Breast epithelium (tissue), 4 donors: ENCODE measurements at regions of chr6 and their contacts with region 1.

Region 1: DNA sequence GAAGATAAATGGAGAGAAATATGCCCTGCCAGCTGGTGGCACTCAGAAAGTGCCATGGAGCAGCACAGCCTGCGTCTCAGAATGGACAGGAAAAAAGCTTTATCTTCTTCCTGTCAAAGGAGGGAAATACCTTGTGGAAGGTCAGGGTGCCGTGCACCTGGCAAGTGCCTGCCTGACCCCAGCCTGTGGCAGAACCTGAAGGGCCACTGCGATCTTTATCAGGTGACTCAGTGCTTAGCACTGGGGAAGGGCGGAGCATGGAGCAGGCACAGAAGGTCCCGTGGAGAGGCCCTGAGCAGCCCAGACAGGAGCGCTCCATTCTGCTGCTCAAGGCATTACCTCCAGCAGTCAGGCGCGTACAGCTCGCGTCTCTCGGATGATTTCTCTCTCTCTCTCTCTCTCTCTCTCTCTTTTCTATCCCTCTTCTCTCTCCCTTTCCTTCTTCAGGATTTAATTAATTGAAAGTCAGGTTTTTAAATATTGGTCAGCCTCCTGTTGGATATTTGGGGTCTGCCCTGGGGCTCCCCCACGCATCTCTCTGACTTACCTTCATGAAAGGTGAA is 31.7 kb downstream of the FOXC1 start:
- DNase-seq: peak in 1 of 2 donors; percentile 34
- H3K4me3 ChIP-seq: no peak overlapping the region
- H3K27ac ChIP-seq: no peak overlapping the region
- H3K4me1 ChIP-seq: no peaks in the 10 kb centered on the region
- H3K27me3 ChIP-seq: no peaks in the 10 kb centered on the region
- CTCF ChIP-seq: no peak
- POLR2A ChIP-seq: no peak

Region 2: DNA sequence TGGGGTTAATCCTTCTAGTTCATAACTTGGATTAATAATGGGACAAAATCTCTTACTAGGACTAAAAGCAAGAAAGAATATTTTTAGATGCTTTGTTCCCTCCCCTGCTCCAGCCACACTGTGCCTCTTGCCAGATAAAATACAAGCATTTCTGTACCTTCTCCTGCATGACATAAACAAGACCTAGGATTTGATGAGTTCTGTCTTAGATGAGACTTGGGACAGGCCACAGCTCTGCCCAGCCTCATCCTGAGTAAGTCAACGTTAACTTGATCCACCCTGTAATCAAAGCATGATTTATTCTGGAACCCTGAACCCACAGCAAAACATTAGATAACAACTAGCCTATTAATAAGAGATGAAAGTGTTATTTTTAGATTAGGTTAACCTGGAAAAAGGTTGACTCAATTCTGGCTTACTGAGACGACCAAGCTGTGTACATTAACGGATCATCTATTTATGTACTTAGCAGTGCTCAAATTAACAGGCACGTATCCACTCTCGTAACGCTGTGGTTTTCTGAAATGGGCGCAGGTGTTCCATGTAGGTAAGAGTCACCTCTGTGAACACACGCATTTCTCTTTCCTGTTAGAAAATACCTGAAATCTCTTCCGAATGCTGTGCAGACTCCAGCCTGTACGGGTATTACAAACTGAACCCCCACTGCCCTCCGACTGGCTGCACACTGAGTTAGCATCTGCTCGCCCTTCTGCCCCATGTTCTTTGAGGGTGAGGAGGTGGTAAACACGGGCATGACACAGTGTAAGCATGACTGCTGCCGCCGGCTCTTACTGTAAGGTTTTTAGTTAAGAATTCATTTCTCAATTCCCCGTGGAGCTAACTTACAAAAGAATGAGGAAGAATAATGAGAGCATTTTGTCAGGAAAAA is 461.6 kb before region 1 on chr6:
- intact Hi-C with region 1: no loop called
- DNase-seq: no peak
- H3K4me3 ChIP-seq: no peak overlapping the region
- H3K27ac ChIP-seq: no peak overlapping the region
- H3K4me1 ChIP-seq: no peaks in the 10 kb centered on the region
- H3K27me3 ChIP-seq: peaks cover 0 to 4% of the 10 kb centered on the region in 2 donors
- CTCF ChIP-seq: no peak
- POLR2A ChIP-seq: no peak

Region 3: DNA sequence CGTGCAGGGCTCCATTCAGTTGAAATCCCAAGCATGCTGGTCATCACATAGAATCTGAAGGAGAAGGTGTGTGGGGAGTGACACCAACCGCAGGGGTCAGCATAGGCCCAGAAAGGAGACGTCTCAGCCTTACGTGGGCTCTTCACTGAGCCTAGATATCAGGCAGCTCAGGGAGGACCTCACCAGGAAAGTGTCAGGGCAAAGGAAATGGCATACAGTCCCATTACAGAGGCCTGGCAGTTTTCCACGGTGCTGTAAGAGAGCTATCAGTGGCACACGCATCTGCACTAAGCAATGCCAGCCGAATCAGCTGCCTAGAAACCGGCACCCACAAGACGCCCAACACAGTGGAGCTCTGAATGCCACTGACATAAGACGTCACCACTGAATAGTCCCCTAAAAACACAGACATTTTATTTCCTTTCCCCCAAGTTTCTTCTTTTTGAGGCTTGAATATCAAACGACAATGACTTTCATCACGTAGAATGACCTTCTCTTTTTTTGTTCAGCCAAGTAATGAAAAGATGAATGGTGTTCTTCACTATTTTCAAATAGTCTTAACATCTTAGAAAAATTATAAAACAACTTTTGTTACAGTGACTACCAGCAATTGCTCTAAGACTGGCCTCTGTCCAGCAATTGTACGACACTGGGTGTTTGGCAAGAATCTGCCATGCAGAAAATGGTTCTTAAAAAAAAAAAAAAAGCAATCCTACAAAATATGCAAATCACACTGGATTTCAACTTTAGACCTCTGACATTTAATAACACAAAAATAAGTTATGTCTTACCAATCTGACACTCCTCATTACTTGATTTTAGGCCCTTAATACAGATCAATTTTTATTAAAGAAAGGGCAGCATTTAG is 418.4 kb before region 1 on chr6:
- intact Hi-C with region 1: no loop called
- DNase-seq: no peak
- H3K4me3 ChIP-seq: no peak overlapping the region
- H3K27ac ChIP-seq: no peak overlapping the region
- H3K4me1 ChIP-seq: no peaks in the 10 kb centered on the region
- H3K27me3 ChIP-seq: peaks cover 0 to 10% of the 10 kb centered on the region in 2 donors
- CTCF ChIP-seq: no peak
- POLR2A ChIP-seq: no peak

Region 4: GRCh38 chr6:3403238-3404173 is 1762.1 kb after region 1 on chr6:
- intact Hi-C with region 1: loop called (anchors 10 kb)
- DNase-seq: no peak
- H3K4me3 ChIP-seq: no peak overlapping the region
- H3K27ac ChIP-seq: peak overlapping the region; percentile 78 to 80
- H3K4me1 ChIP-seq: peaks cover 0 to 7% of the 10 kb centered on the region in 2 donors
- H3K27me3 ChIP-seq: no peaks in the 10 kb centered on the region
- CTCF ChIP-seq: peak in 1 of 3 donors; percentile 8
- POLR2A ChIP-seq: no peak